MCF 10A (cell line): ENCODE measurements at regions of chr2 and their contacts with region 1.

Region 1: GRCh38 chr2:96024336-96025193 is 10.2 kb downstream of the GPAT2 start:
- DNase-seq: no peak
- H3K4me3 Mint-ChIP-seq: no peak overlapping the region
- H3K27ac Mint-ChIP-seq: no peak overlapping the region
- H3K4me1 Mint-ChIP-seq: peaks cover 5% of the 10 kb centered on the region
- H3K27me3 Mint-ChIP-seq: no peaks in the 10 kb centered on the region
- CTCF ChIP-seq: no peak

Region 2: GRCh38 chr2:96116879-96117697 is 92.5 kb after region 1 on chr2:
- CTCF ChIA-PET with region 1: interaction called, 24 read pairs
- POLR2A ChIA-PET with region 1: no interaction called
- intact Hi-C with region 1: no loop called
- DNase-seq: peak; percentile 38
- H3K4me3 Mint-ChIP-seq: peak overlapping the region; percentile 38
- H3K27ac Mint-ChIP-seq: no peak overlapping the region
- H3K4me1 Mint-ChIP-seq: no peaks in the 10 kb centered on the region
- H3K27me3 Mint-ChIP-seq: peaks cover 40% of the 10 kb centered on the region
- CTCF ChIP-seq: peak; percentile 84